ENCODE measurements at regions of chr10 and their contacts with region 1.

Region 1: GRCh38 chr10:110502851-110503301 is 5.2 kb downstream of the DUSP5 start:
- DNase-seq: no peak
- H3K27ac ChIP-seq: peak overlapping the region; percentile 65
- CTCF ChIP-seq: no peak

Region 2: GRCh38 chr10:110260746-110261477 is 242.0 kb before region 1 on chr10:
- CTCF ChIA-PET with region 1: no interaction called
- POLR2A ChIA-PET with region 1: no interaction called
- DNase-seq: no peak
- H3K27ac ChIP-seq: no peak overlapping the region
- CTCF ChIP-seq: no peak

Region 3: DNA sequence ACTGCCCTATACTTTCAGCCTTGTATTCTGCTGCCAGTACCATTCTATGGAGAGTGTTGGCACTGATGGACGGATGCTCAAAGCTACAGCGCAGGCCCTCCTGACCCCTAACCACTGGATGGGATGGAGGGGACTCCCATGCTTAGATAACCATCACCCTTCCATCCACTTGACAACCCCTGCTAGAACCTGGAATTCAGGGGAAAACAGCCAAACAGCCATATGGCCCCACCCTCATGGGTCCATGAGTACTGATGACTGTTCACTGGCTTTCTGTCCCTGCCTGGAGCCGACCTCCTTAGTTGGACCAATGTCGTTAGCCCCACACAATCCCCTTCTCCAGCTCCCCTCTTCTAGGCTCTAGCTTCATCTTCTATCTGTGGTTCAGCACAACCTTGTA is 11.1 kb after region 1 on chr10:
- CTCF ChIA-PET with region 1: interaction called, 10 read pairs
- POLR2A ChIA-PET with region 1: no interaction called
- DNase-seq: no peak
- H3K27ac ChIP-seq: peak overlapping the region; percentile 46
- CTCF ChIP-seq: no peak

Measured in RWPE1 (cell line).